Activated B cell treated with CpG ODN at 0.5 μM for 24 hours (primary cell): ENCODE measurements at regions of chr19 and their contacts with region 1.

Region 1: GRCh38 chr19:50357178-50358100 is 8.0 kb downstream of the NAPSA start:
- DNase-seq: peak; percentile 82
- ATAC-seq: peak; percentile 82
- H3K4me3 Mint-ChIP-seq: peak overlapping the region; percentile 91
- H3K27ac Mint-ChIP-seq: peak overlapping the region; percentile 98
- H3K4me1 Mint-ChIP-seq: peaks cover 54% of the 10 kb centered on the region
- H3K27me3 Mint-ChIP-seq: no peaks in the 10 kb centered on the region
- CTCF ChIP-seq: no peak

Region 2: DNA sequence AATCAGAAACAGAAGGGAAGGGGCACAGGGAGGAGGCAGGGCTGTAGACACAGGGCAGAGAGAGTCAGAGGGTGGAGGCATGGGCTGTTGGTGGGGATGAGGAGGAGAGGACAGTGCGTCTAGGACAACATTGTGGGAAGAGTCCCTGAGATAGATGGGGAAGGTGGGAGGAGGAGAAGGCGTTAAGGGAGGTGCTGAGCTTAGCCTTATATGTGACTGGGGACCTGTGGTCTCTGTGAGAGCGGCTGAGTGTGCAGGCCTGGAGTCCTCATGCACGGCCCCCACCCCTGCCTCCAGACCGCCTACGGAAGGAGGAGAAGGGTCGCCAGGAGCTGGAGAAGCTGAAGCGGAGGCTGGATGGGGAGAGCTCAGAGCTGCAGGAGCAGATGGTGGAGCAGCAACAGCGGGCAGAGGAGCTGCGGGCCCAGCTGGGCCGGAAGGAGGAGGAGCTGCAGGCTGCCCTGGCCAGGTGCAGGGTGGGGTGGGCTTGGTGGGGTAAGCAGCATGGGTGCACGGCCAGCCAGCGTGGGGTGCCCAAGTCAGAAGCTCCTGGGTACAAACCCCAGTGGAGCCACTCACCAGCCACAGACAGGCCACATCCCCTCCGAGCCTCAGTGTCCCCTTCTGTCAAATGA is 85.1 kb before region 1 on chr19:
- CTCF ChIA-PET with region 1: no interaction called
- POLR2A ChIA-PET with region 1: no interaction called
- intact Hi-C with region 1: no loop called
- DNase-seq: no peak
- ATAC-seq: no peak
- H3K4me3 Mint-ChIP-seq: no peak overlapping the region
- H3K27ac Mint-ChIP-seq: no peak overlapping the region
- H3K4me1 Mint-ChIP-seq: no peaks in the 10 kb centered on the region
- H3K27me3 Mint-ChIP-seq: peaks cover 20% of the 10 kb centered on the region
- CTCF ChIP-seq: no peak

Region 3: GRCh38 chr19:50341091-50341564 is 16.3 kb before region 1 on chr19:
- CTCF ChIA-PET with region 1: interaction called, 26 read pairs
- POLR2A ChIA-PET with region 1: interaction called, 84 read pairs
- intact Hi-C with region 1: loop called (anchors 2 kb)
- DNase-seq: no peak
- ATAC-seq: peak; percentile 65
- H3K4me3 Mint-ChIP-seq: peak overlapping the region; percentile 81
- H3K27ac Mint-ChIP-seq: peak overlapping the region; percentile 92
- H3K4me1 Mint-ChIP-seq: peaks cover 81% of the 10 kb centered on the region
- H3K27me3 Mint-ChIP-seq: no peaks in the 10 kb centered on the region
- CTCF ChIP-seq: no peak

Region 4: DNA sequence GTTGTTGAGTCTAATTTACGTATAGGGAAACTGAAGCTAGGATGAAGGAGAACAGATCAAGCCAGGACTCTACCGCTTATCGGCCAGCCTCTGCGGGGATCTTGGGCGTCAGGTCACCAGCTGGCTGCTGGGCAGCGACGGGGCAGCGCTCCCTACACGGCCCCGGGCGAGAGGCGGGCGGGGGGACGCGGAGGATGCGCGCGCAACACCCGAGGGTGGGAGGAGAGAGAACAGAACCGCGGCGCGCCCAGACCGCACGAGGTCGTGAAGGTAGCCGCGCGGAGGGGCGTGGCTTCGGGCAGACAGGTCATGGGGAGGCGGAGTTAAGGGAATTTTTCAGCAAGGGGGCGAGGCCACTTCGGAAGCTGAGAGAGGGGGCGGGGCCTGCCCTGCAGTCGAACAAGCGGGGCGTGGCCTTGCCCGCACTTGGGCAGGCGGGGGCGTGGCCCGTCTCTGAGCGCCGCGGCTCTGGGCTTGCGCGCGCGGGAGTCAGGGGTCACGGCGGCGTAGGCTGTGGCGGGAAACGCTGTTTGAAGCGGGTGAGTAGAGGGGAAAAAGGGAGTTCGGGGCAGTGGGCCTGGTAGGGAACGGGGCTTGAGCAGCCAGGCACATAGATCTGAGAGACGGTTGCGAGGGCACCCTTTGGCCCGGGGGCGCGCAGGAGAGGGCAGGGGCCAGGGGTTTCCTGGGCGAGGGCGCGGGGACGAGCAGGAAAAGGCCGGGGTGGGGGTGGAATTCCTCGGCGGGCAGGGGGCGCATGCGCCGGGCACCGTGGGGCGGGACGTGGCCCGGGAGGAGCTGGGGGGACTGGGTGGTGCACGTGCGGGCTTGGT is 26.6 kb after region 1 on chr19 and contains the start of gene POLD1:
- CTCF ChIA-PET with region 1: no interaction called
- POLR2A ChIA-PET with region 1: interaction called, 12 read pairs
- intact Hi-C with region 1: no loop called
- DNase-seq: peak; percentile 97
- ATAC-seq: peak; percentile 94
- H3K4me3 Mint-ChIP-seq: peak within 1 kb of the TSS; percentile 96
- H3K27ac Mint-ChIP-seq: peak within 1 kb of the TSS; percentile 85
- H3K4me1 Mint-ChIP-seq: peaks cover 28% of the 10 kb centered on the region
- H3K27me3 Mint-ChIP-seq: no peaks in the 10 kb centered on the region
- CTCF ChIP-seq: no peak
- total RNA-seq, gene POLD1: 58.8 and 65.5 TPM in 2 replicates

Region 5: DNA sequence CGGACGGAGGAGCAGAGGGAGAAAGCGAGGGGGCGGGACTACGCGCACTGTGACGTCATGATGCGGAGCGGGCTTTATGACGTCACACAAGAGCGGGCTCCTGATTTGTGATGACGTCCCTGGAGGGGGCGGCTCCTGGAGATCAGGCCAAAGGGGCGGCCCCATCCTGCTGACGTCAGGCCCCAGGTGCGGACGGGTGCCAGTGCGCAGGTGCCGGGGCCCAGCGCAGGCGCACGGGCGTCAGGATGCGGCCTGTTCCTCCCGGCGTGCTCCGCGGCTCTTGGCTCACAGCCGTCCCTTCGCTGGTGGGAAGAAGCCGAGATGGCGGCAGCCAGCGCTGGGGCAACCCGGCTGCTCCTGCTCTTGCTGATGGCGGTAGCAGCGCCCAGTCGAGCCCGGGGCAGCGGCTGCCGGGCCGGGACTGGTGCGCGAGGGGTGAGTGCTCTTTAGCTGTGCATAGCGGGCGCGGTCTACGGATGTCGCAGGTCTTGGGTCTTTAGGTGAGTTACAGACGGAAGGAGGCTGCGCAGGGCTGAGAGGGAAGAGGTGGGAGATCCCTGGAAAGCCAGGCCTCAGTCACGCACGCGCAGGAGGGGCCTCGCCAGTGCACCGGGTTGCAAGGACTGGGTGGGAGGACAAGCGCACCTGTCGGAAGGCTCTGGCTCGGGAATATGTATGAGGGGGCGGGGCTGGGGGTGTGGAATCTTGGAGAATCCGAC is 118.9 kb after region 1 on chr19 and contains the starts of genes EMC10 and GARIN5A:
- CTCF ChIA-PET with region 1: interaction called, 11 read pairs
- POLR2A ChIA-PET with region 1: interaction called, 5 read pairs
- intact Hi-C with region 1: no loop called
- DNase-seq: peak; percentile 95
- ATAC-seq: peak; percentile 95
- H3K4me3 Mint-ChIP-seq: peak within 1 kb of the TSS; percentile 93
- H3K27ac Mint-ChIP-seq: peak within 1 kb of the TSS; percentile 85
- H3K4me1 Mint-ChIP-seq: peaks cover 23% of the 10 kb centered on the region
- H3K27me3 Mint-ChIP-seq: no peaks in the 10 kb centered on the region
- CTCF ChIP-seq: no peak
- total RNA-seq, gene EMC10: 70.8 and 72.1 TPM in 2 replicates
- total RNA-seq, gene GARIN5A: 0.29 and 0.67 TPM in 2 replicates

Region 6: GRCh38 chr19:50777754-50778303 is 420.4 kb after region 1 on chr19:
- CTCF ChIA-PET with region 1: no interaction called
- POLR2A ChIA-PET with region 1: no interaction called
- intact Hi-C with region 1: loop called (anchors 1 kb)
- DNase-seq: no peak
- ATAC-seq: no peak
- H3K4me3 Mint-ChIP-seq: no peak overlapping the region
- H3K27ac Mint-ChIP-seq: no peak overlapping the region
- H3K4me1 Mint-ChIP-seq: peaks cover 3% of the 10 kb centered on the region
- H3K27me3 Mint-ChIP-seq: peaks cover 55% of the 10 kb centered on the region
- CTCF ChIP-seq: no peak